GM12878 (cell line): ENCODE measurements at regions of chr11 and their contacts with region 1.

Region 1: DNA sequence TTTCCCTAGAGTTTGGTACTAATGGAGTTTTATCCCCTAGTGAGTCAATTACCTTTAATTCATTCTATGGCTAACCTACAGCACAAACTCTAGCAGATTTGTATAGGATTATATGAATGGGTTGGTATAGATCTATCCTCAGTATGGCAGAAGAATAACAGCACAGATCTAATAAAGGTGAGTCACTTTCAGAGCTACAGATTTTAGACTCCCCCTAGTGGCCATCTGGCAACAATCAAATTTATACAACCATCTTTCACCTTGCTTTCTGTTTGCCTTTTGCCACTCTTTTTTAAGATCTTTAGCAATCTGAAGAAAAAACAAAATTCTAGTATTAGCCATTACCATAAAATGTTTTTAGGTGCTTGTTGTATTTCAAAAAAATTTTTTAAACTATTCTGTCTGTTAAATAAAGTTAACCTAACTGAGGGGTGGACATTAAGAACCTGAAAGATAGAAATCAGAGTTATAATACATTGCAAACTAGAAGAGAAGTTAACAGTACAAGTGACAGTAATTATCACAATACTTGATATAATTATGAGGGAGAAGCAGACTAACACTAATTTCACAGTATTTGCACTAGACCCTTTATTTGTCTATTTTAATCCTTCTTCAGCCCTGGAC is 25.8 kb downstream of the DDIAS start:
- DNase-seq: no peak
- ATAC-seq: peak; percentile 93
- H3K4me3 ChIP-seq: no peak overlapping the region
- H3K27ac ChIP-seq: no peak overlapping the region; the same call in 1 of the 2 replicates
- H3K4me1 ChIP-seq: peaks cover 20% of the 10 kb centered on the region
- H3K27me3 ChIP-seq: no peaks in the 10 kb centered on the region
- CTCF ChIP-seq: peak; percentile 73 to 77 (median 76)
- EP300 ChIP-seq: no peak
- POLR2A ChIP-seq: no peak
- RAD21 ChIP-seq: peak; percentile 63

Region 2: GRCh38 chr11:82900277-82901164 is 26.8 kb before region 1 on chr11 and contains the start of gene PRCP:
- CTCF ChIA-PET with region 1: interaction called, 8 read pairs
- POLR2A ChIA-PET with region 1: interaction called, 7 read pairs
- RAD21 ChIA-PET with region 1: interaction called, 14 read pairs
- SMC1A ChIA-PET with region 1: interaction called, 12 read pairs
- in situ Hi-C with region 1: no loop called
- intact Hi-C with region 1: no loop called
- DNase-seq: peak; percentile 84
- ATAC-seq: peak; percentile 88
- H3K4me3 ChIP-seq: peak within 1 kb of the TSS; percentile 82
- H3K27ac ChIP-seq: peak within 1 kb of the TSS; percentile 84
- H3K4me1 ChIP-seq: peaks cover 15% of the 10 kb centered on the region
- H3K27me3 ChIP-seq: no peaks in the 10 kb centered on the region
- CTCF ChIP-seq: no peak
- EP300 ChIP-seq: 0 out of 4 replicates have a peak, but pooled peaks of 1 of the 2 experiments have one; percentile 12
- POLR2A ChIP-seq: peak; percentile 84
- RAD21 ChIP-seq: no peak
- polyA plus RNA-seq, gene PRCP: 21.5 to 25.3 TPM

Region 3: DNA sequence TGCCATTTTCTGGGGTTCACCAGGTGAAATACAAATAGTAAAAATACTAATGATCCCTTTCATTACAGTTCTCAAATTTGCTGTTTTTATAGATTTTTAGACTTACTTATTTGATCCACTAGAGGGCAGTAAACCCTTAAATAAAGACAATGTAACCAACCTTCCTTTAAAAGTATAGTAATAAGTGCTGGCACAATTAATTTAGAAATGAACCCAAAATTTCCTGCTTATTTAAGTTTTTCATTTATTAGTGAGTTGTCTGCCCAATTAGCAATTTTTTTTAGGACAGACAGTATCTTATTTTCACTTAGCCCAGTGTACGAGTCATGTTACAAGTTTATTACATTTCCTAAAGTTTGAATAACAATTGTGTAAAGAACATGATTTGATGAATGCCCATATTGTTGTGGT is 21.1 kb before region 1 on chr11:
- CTCF ChIA-PET with region 1: interaction called, 15 read pairs
- POLR2A ChIA-PET with region 1: interaction called, 7 read pairs
- RAD21 ChIA-PET with region 1: interaction called, 20 read pairs
- SMC1A ChIA-PET with region 1: interaction called, 34 read pairs
- in situ Hi-C with region 1: no loop called
- intact Hi-C with region 1: loop called (anchors 1 kb)
- DNase-seq: no peak
- ATAC-seq: no peak
- H3K4me3 ChIP-seq: no peak overlapping the region
- H3K27ac ChIP-seq: peak overlapping the region; percentile 49; the same call in 1 of the 2 replicates
- H3K4me1 ChIP-seq: peaks cover 15% of the 10 kb centered on the region; the same call in 1 of the 2 replicates
- H3K27me3 ChIP-seq: no peaks in the 10 kb centered on the region
- CTCF ChIP-seq: peak in 1 of 3 experiments; percentile 32; a peak in 2 of 6 replicates
- EP300 ChIP-seq: no peak
- POLR2A ChIP-seq: no peak
- RAD21 ChIP-seq: peak; percentile 66

Region 4: GRCh38 chr11:82945682-82946081 is 18.3 kb after region 1 on chr11:
- CTCF ChIA-PET with region 1: interaction called, 8 read pairs
- POLR2A ChIA-PET with region 1: interaction called, 6 read pairs
- RAD21 ChIA-PET with region 1: interaction called, 4 read pairs
- SMC1A ChIA-PET with region 1: interaction called, 29 read pairs
- in situ Hi-C with region 1: no loop called
- intact Hi-C with region 1: no loop called
- DNase-seq: no peak
- ATAC-seq: no peak
- H3K4me3 ChIP-seq: no peak overlapping the region
- H3K27ac ChIP-seq: no peak overlapping the region
- H3K4me1 ChIP-seq: no peaks in the 10 kb centered on the region
- H3K27me3 ChIP-seq: no peaks in the 10 kb centered on the region
- CTCF ChIP-seq: no peak
- EP300 ChIP-seq: no peak
- POLR2A ChIP-seq: no peak
- RAD21 ChIP-seq: no peak

Region 5: GRCh38 chr11:82959987-82960778 is 32.8 kb after region 1 on chr11:
- CTCF ChIA-PET with region 1: interaction called, 7 read pairs
- POLR2A ChIA-PET with region 1: interaction called, 12 read pairs
- RAD21 ChIA-PET with region 1: interaction called, 14 read pairs
- SMC1A ChIA-PET with region 1: interaction called, 85 read pairs
- in situ Hi-C with region 1: no loop called
- intact Hi-C with region 1: no loop called
- DNase-seq: peak; percentile 65
- ATAC-seq: peak; percentile 93
- H3K4me3 ChIP-seq: peak overlapping the region; percentile 3; the same call in 1 of the 2 replicates
- H3K27ac ChIP-seq: peak overlapping the region; percentile 72
- H3K4me1 ChIP-seq: peaks cover 17% of the 10 kb centered on the region
- H3K27me3 ChIP-seq: no peaks in the 10 kb centered on the region
- CTCF ChIP-seq: no peak
- EP300 ChIP-seq: peak in 1 of 2 experiments; percentile 87; a peak in 2 of 4 replicates
- POLR2A ChIP-seq: no peak
- RAD21 ChIP-seq: no peak

Region 6: GRCh38 chr11:82969811-82970210 is 42.4 kb after region 1 on chr11:
- CTCF ChIA-PET with region 1: interaction called, 5 read pairs
- POLR2A ChIA-PET with region 1: interaction called, 3 read pairs
- RAD21 ChIA-PET with region 1: interaction called, 9 read pairs
- SMC1A ChIA-PET with region 1: interaction called, 85 read pairs
- in situ Hi-C with region 1: no loop called
- intact Hi-C with region 1: loop called (anchors 5 kb)
- DNase-seq: peak; percentile 84
- ATAC-seq: peak; percentile 83
- H3K4me3 ChIP-seq: no peak overlapping the region
- H3K27ac ChIP-seq: peak overlapping the region; percentile 94
- H3K4me1 ChIP-seq: peaks cover 41% of the 10 kb centered on the region
- H3K27me3 ChIP-seq: no peaks in the 10 kb centered on the region
- CTCF ChIP-seq: no peak
- EP300 ChIP-seq: peak; percentile 99 to 100
- POLR2A ChIP-seq: no peak
- RAD21 ChIP-seq: no peak

Region 7: GRCh38 chr11:83865636-83866461 is 938.5 kb after region 1 on chr11:
- CTCF ChIA-PET with region 1: no interaction called
- POLR2A ChIA-PET with region 1: no interaction called
- RAD21 ChIA-PET with region 1: no interaction called
- SMC1A ChIA-PET with region 1: no interaction called
- in situ Hi-C with region 1: no loop called
- intact Hi-C with region 1: no loop called
- DNase-seq: no peak
- ATAC-seq: no peak
- H3K4me3 ChIP-seq: no peak overlapping the region
- H3K27ac ChIP-seq: no peak overlapping the region
- H3K4me1 ChIP-seq: no peaks in the 10 kb centered on the region
- H3K27me3 ChIP-seq: no peaks in the 10 kb centered on the region
- CTCF ChIP-seq: no peak
- EP300 ChIP-seq: no peak
- POLR2A ChIP-seq: no peak
- RAD21 ChIP-seq: no peak